ENCODE measurements at regions of chr3 and their contacts with region 1.

Region 1: GRCh38 chr3:9422712-9423424 is 25.5 kb downstream of the SETD5 start:
- DNase-seq: peak; percentile 53 to 91 (median 66)
- ATAC-seq: peak; percentile 92
- H3K4me3 ChIP-seq: no peak overlapping the region
- H3K27ac ChIP-seq: peak overlapping the region; percentile 77
- H3K4me1 ChIP-seq: peaks cover 0 to 21% of the 10 kb centered on the region in 2 experiments; a peak in 3 of 5 replicates
- H3K27me3 ChIP-seq: no peaks in the 10 kb centered on the region
- CTCF ChIP-seq: peak; percentile 48 to 78 (median 66); a peak in 5 of 6 replicates
- EP300 ChIP-seq: peak; percentile 87
- POLR2A ChIP-seq: no peak
- RAD21 ChIP-seq: peak; percentile 75 to 94

Region 2: GRCh38 chr3:8980756-8981257 is 442.1 kb before region 1 on chr3:
- CTCF ChIA-PET with region 1: no interaction called
- POLR2A ChIA-PET with region 1: no interaction called
- in situ Hi-C with region 1: no loop called
- intact Hi-C with region 1: no loop called
- DNase-seq: no peak
- ATAC-seq: no peak
- H3K4me3 ChIP-seq: no peak overlapping the region
- H3K27ac ChIP-seq: no peak overlapping the region
- H3K4me1 ChIP-seq: peaks cover 0 to 8% of the 10 kb centered on the region in 2 experiments; a peak in 2 of 5 replicates
- H3K27me3 ChIP-seq: peaks cover 41 to 60% of the 10 kb centered on the region in 2 experiments
- CTCF ChIP-seq: no peak
- EP300 ChIP-seq: no peak
- POLR2A ChIP-seq: no peak
- RAD21 ChIP-seq: no peak

Region 3: DNA sequence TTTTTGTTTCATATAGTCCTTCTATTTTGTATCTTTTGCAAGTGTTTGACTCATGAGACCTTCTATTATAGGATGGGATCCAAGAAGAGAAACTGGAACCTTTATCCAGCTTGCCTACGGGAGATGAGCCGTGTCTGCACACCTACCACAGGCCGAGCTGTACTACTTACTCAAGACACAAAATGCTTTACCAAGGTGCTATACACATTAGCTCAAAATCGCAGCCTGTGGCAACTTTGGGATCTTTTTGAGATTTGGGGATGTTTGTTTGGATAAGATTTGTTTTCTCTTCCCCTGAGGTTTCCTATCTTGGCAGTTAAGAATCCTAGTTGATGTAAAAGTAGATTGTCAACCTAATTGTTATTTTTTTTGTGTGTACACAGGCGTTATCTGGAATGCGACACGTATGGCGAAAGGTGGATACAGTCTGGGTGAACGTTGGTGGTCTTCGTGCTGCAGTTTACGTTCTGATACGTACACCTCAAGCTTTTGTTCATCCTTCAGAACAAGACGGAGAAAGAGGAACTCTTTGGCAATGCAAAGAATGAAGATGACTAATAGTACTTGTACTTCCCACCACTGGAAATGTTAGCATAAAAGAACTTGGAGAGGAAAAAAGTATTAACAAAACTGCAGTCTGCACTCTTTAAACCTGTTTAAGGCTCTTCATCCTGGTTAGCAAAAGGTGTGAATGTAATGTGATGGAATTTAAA is 38.6 kb before region 1 on chr3:
- CTCF ChIA-PET with region 1: no interaction called
- POLR2A ChIA-PET with region 1: interaction called, 3 read pairs
- in situ Hi-C with region 1: no loop called
- intact Hi-C with region 1: loop called (anchors 5 kb)
- DNase-seq: no peak
- ATAC-seq: no peak
- H3K4me3 ChIP-seq: no peak overlapping the region
- H3K27ac ChIP-seq: no peak overlapping the region
- H3K4me1 ChIP-seq: no peaks in the 10 kb centered on the region
- H3K27me3 ChIP-seq: no peaks in the 10 kb centered on the region
- CTCF ChIP-seq: no peak
- EP300 ChIP-seq: no peak
- POLR2A ChIP-seq: no peak; the same call in 1 of the 2 replicates
- RAD21 ChIP-seq: no peak

Region 4: DNA sequence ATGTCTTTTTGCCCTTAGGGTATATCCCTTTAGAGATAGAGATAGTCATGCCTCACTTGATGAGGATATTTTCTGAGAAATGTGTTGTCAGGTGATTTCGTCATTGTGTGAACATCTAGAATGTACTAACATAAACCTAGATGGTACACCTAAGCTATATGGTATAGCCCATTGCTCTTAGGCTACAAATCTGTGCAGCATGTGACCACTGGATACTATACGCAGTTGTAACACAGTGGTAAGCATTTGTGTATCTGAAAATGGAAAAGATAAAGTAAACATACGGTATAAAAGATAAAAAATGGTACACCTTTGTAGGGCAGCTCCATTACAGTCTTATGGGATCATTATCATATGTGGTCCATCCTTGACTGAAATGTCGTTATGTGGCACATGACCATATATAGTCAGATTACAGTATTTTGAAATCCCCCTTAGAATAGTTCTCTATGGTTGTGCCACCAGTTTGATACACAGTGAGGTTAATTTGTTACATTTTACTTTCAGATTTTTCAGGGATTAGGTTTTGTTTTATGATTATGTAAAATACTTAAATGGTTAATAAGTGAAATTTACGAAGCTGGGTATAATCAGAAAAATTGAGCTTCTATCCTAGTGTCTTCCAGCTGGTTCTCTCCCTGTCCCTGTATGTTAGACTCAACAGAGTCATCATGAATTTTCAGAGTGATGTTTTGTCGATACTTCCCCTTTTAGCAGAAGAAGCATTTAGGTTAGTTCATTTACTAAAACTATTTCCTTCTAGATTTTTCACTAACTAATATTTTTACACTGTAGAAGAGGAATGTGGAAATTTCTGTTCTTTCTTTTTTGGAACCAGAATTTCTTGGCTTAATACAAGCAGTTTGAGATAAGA is 12.7 kb before region 1 on chr3:
- CTCF ChIA-PET with region 1: no interaction called
- POLR2A ChIA-PET with region 1: interaction called, 25 read pairs
- in situ Hi-C with region 1: no loop called
- intact Hi-C with region 1: no loop called
- DNase-seq: no peak
- ATAC-seq: peak; percentile 74
- H3K4me3 ChIP-seq: no peak overlapping the region
- H3K27ac ChIP-seq: peak overlapping the region; percentile 8; the same call in 1 of the 3 replicates
- H3K4me1 ChIP-seq: peaks cover 3 to 30% of the 10 kb centered on the region in 2 experiments; a peak in 3 of 5 replicates
- H3K27me3 ChIP-seq: no peaks in the 10 kb centered on the region
- CTCF ChIP-seq: no peak
- EP300 ChIP-seq: peak; percentile 50; the same call in 1 of the 2 replicates
- POLR2A ChIP-seq: no peak
- RAD21 ChIP-seq: no peak

Measured in K562 (cell line).